Activated CD4-positive, alpha-beta memory T cell treated with anti-CD3 and anti-CD28 coated beads for 36 hours (primary cell): ENCODE measurements at regions of chr13 and their contacts with region 1.

Region 1: DNA sequence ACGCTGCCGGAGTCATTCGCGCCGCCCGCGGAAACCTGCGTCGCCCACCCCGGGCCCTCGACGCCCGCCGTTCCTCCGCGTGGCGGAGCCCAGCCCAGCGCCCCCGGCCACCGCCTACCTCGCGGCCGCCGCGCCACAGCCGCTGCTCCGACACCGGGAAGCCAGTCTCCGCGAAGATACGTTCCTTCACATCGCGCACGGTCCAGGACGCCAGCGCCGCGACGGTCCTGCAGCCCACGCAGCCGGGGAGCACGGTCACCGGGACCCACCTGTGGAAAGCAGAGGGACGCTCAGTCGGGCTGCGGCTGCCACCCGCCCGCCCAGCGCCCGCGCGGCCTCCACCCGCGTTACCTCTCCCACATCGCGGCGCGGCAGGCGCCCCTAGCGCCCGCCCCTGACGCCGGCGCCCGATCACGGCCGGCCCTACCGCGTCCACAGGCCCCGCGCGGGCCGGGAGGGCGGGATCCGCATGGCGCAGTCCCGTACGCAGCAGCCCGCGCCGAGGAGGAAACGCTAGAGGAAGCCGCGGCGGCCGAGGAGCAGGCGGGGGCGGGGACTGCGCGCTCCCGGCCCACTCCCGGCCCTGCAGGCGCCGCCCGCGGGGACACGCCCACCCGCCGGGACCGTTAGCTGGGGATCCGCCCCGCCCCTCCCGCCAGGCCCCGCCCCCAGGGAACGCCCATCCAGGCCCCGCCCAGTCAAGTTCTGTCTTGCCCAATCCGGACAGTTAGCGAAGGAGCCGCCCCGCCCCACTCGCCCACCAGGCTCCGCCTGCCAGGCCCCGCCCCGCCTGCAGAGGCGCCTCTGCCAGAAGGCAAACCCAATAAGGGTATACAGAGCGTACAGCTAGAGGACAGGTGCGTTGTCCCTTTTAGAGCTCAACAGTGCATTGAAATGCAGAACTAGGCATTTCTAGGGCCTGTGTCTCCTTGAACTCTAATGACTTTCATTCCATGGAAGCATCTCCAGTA is 58.2 kb downstream of the SACS start:
- DNase-seq: peak; percentile 98
- H3K4me3 Mint-ChIP-seq: peak overlapping the region; percentile 73
- H3K27ac Mint-ChIP-seq: no peak overlapping the region
- H3K4me1 Mint-ChIP-seq: peaks cover 69% of the 10 kb centered on the region
- H3K27me3 Mint-ChIP-seq: no peaks in the 10 kb centered on the region

Region 2: DNA sequence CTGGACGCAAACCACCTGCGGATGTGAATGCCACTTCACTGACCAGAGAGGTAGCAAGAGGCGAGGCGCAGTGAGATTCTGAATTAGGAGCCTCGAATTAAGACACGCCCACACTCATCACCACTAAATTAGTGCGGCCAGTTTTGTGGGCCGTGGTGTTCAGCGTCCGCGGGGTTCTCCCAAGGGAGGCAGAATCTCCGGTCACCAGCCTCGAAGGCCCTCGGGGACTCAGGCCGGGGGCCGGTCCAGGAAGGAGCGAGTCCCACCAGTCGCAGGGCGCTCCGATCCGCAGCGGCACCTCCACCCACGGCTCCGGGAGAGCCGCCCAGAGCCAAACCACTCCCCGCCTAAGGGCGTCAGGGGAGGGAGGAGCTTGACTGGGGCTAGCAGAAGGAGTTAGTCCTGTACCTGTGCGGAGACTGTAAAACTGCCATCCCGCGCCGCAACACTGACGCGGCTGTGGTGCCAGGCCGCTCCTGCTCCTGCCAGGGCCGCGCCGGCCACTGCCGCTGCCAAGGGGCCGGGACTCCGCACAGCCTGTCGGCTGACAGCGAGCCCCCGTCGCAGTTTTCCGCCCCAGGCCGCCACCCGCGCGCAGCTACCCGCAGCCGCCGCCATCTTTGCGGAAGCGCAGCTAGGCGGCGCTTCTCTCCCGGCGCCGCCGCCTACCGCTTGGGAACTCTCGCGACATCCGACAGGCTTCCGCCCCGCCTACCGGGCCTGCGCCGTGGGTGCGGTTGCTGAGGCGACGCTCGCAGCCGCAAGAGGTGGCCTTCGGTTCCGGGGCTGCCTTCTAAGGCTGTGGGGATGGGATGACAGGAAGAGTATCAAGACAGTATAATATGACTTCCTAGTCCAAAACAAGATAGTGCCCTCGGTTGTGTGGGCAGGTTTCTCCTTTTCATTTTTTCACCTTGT is 1771.5 kb before region 1 on chr13 and contains the start of gene MICU2:
- CTCF ChIA-PET with region 1: no interaction called
- POLR2A ChIA-PET with region 1: no interaction called
- intact Hi-C with region 1: loop called (anchors 10 kb)
- DNase-seq: peak; percentile 97
- H3K4me3 Mint-ChIP-seq: peak within 1 kb of the TSS; percentile 81
- H3K27ac Mint-ChIP-seq: peak within 1 kb of the TSS; percentile 89
- H3K4me1 Mint-ChIP-seq: peaks cover 26% of the 10 kb centered on the region
- H3K27me3 Mint-ChIP-seq: peaks cover 5% of the 10 kb centered on the region
- total RNA-seq, gene MICU2: 32.6 to 33.3 TPM

Region 3: DNA sequence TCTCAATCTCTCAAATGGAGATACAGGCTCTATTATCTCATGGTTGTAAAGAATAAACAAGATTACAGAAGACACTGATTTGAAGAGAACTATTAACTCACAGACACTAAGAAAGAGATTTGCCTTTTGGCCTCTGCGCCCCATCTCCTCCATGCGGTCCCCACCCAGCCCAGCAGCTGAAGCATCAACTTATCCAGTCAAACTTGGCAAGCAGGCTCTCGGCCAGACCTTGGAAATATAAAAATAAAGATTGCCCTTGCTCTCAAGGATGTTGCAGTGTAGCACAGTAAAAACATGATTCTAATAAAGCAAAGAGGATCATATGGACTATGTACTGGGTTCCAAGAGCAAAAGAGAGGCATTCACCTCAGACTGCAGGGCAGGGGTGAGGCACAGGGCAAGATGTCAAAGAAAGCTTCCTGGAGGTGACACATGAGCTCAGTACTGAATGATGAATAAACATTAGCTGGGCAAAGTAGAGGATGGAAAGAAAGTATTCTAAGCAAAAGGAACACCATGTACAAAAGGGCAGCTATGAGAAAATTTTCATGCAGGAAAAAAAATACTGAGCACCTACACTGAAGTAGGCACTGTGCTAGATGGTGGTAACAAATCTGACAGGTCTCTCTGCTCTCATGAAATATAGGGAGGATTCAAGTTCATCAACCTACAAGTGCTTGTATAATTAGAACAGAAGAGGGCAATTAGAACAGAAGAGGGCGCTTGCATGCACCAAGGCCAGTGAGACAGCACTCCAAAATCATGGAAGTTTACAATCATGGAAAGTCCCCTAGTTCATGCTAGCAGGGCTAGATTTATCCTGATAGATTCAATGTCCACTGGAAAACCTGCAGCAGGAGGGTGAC is 26.8 kb before region 1 on chr13:
- CTCF ChIA-PET with region 1: no interaction called
- POLR2A ChIA-PET with region 1: no interaction called
- intact Hi-C with region 1: no loop called
- DNase-seq: no peak
- H3K4me3 Mint-ChIP-seq: no peak overlapping the region
- H3K27ac Mint-ChIP-seq: no peak overlapping the region
- H3K4me1 Mint-ChIP-seq: peaks cover 13% of the 10 kb centered on the region
- H3K27me3 Mint-ChIP-seq: no peaks in the 10 kb centered on the region

Region 4: GRCh38 chr13:23794267-23795161 is 419.2 kb after region 1 on chr13:
- CTCF ChIA-PET with region 1: no interaction called
- POLR2A ChIA-PET with region 1: no interaction called
- intact Hi-C with region 1: loop called (anchors 10 kb)
- DNase-seq: no peak
- H3K4me3 Mint-ChIP-seq: no peak overlapping the region
- H3K27ac Mint-ChIP-seq: no peak overlapping the region
- H3K4me1 Mint-ChIP-seq: peaks cover 29% of the 10 kb centered on the region
- H3K27me3 Mint-ChIP-seq: no peaks in the 10 kb centered on the region

Region 5: GRCh38 chr13:23888658-23889614 is 513.6 kb after region 1 on chr13 and contains the start of gene MIPEP:
- CTCF ChIA-PET with region 1: no interaction called
- POLR2A ChIA-PET with region 1: no interaction called
- intact Hi-C with region 1: loop called (anchors 1 kb)
- DNase-seq: peak; percentile 95
- H3K4me3 Mint-ChIP-seq: peak within 1 kb of the TSS; percentile 82
- H3K27ac Mint-ChIP-seq: peak within 1 kb of the TSS; percentile 62
- H3K4me1 Mint-ChIP-seq: peaks cover 21% of the 10 kb centered on the region
- H3K27me3 Mint-ChIP-seq: no peaks in the 10 kb centered on the region
- total RNA-seq, gene MIPEP: 16.6 to 16.7 TPM

Region 6: GRCh38 chr13:23969647-23970046 is 594.4 kb after region 1 on chr13:
- CTCF ChIA-PET with region 1: no interaction called
- POLR2A ChIA-PET with region 1: no interaction called
- intact Hi-C with region 1: no loop called
- DNase-seq: no peak
- H3K4me3 Mint-ChIP-seq: no peak overlapping the region
- H3K27ac Mint-ChIP-seq: no peak overlapping the region
- H3K4me1 Mint-ChIP-seq: peaks cover 19% of the 10 kb centered on the region
- H3K27me3 Mint-ChIP-seq: no peaks in the 10 kb centered on the region